ENCODE measurements at regions of chr10 and their contacts with region 1.

Region 1: DNA sequence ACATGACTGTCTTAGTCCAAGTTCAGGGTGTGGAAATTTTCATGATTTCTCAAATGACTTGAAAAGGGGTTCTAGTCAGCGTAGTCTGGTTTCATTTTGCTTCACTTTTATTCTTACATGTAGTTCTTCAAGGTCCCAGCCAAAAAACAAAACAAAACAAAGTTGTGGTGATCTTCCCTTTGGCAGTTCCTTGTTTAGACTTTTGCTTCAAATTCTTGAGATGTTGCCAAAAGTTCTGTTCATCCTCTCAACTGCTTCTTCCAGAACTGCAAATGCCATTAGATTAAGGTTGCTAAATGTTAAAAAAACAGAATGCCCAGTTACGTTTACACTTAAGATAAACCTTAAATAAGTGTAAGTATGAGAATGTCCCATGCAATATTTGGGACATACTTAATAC is 370.8 kb upstream of the LRRTM3 start:
- DNase-seq: no peak
- H3K4me3 ChIP-seq: no peak overlapping the region
- H3K27ac ChIP-seq: no peak overlapping the region
- H3K4me1 ChIP-seq: no peaks in the 10 kb centered on the region
- H3K27me3 ChIP-seq: no peaks in the 10 kb centered on the region
- CTCF ChIP-seq: no peak

Region 2: GRCh38 chr10:65204999-65205398 is 1350.1 kb before region 1 on chr10:
- CTCF ChIA-PET with region 1: interaction called, 17 read pairs
- POLR2A ChIA-PET with region 1: no interaction called
- intact Hi-C with region 1: no loop called
- DNase-seq: no peak
- H3K4me3 ChIP-seq: no peak overlapping the region
- H3K27ac ChIP-seq: no peak overlapping the region
- H3K4me1 ChIP-seq: no peaks in the 10 kb centered on the region
- H3K27me3 ChIP-seq: no peaks in the 10 kb centered on the region
- CTCF ChIP-seq: no peak

Region 3: DNA sequence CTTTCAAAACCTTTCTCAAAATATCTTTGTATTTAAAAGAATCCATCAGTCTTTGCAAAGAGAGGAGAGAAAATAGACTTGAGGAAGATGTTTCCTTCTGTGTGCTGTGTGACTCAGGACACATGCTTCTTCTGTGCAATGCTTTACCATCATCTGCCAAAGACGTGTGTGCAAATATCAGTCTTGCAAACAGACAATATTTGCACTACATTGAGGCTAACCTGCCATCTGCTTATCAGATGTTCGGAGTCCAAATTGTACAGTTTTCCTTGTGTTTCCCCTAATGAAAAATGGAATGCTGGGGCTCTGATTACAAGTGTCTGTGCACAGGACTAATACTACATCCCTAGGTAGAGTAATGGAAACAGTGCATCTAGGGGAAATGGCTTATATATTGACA is 17.6 kb after region 1 on chr10:
- CTCF ChIA-PET with region 1: no interaction called
- POLR2A ChIA-PET with region 1: no interaction called
- intact Hi-C with region 1: no loop called
- DNase-seq: no peak
- H3K4me3 ChIP-seq: no peak overlapping the region
- H3K27ac ChIP-seq: no peak overlapping the region
- H3K4me1 ChIP-seq: no peaks in the 10 kb centered on the region
- H3K27me3 ChIP-seq: no peaks in the 10 kb centered on the region
- CTCF ChIP-seq: no peak

Measured in PC-9 (cell line).